A549 (cell line): ENCODE measurements at regions of chr16 and their contacts with region 1.

Region 1: DNA sequence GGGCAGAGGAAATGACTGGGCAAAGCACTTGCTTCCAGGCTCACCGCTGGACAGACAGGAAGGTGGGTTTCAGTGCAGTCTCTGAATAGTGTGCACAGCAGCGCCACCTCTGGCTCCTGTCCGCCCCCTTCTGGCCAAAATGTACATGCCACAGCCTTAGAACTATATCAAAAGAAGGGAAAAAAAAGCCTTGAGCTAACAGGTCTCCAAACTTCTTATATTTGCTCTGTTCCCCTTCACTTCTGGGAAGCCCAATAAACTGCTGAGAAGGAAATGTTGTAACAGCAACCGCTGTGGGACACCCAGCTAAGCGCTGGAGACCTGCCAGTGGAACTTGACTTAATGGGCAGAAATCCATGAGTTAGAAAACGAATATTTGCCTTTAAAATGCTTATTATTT is 17.5 kb downstream of the COG7 start:
- DNase-seq: peak; percentile 73 to 74
- ATAC-seq: peak; percentile 94 to 99
- H3K4me3 ChIP-seq: no peak overlapping the region
- H3K27ac ChIP-seq: no peak overlapping the region
- H3K4me1 ChIP-seq: no peaks in the 10 kb centered on the region
- CTCF ChIP-seq: peak; percentile 91
- EP300 ChIP-seq: no peak
- POLR2A ChIP-seq: no peak
- RAD21 ChIP-seq: peak; percentile 65 to 77

Region 2: DNA sequence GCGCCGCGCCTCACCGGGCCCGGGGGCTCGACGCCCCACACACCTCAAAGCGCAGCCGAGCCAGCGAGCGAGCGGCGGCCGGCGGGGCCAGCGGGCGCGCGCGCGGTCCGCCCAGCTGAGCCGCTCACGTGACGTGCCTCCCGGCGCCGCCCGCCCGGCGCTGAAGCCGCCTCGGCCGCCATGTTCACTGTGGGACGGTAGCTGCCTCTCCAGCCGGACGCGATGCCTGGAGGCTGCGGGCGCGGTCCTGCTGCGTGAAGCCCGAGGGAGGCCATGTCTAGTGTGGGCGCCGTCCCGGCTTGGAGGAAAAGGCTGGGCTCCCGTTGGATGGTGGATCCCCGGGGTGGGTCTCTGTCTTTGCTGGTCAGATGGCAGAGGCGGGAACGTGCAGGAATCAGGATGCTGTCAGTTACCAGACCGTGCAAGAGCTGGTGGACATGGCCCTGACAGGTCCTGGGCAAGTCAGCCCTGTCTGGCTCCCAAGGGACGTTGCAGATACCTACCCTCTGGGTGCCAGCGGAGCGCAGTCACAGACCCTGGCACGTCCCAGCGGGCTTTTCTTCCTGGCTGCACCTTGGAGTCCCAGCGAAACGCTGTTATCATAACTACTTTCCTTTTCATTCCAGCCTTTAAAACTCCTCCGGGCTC is 286.0 kb before region 1 on chr16 and contains the start of gene USP31:
- CTCF ChIA-PET with region 1: interaction called, 13 read pairs
- POLR2A ChIA-PET with region 1: no interaction called
- DNase-seq: peak; percentile 82 to 97
- ATAC-seq: peak; percentile 95 to 100
- H3K4me3 ChIP-seq: peak within 1 kb of the TSS; percentile 64
- H3K27ac ChIP-seq: peak within 1 kb of the TSS; percentile 95 to 97
- H3K4me1 ChIP-seq: peaks cover 39% of the 10 kb centered on the region
- CTCF ChIP-seq: no peak
- EP300 ChIP-seq: no peak
- POLR2A ChIP-seq: peak; percentile 56; the same call in 1 of the 2 replicates
- RAD21 ChIP-seq: no peak
- polyA plus RNA-seq, gene USP31: 17.9 and 18.0 TPM in 2 replicates

Region 3: DNA sequence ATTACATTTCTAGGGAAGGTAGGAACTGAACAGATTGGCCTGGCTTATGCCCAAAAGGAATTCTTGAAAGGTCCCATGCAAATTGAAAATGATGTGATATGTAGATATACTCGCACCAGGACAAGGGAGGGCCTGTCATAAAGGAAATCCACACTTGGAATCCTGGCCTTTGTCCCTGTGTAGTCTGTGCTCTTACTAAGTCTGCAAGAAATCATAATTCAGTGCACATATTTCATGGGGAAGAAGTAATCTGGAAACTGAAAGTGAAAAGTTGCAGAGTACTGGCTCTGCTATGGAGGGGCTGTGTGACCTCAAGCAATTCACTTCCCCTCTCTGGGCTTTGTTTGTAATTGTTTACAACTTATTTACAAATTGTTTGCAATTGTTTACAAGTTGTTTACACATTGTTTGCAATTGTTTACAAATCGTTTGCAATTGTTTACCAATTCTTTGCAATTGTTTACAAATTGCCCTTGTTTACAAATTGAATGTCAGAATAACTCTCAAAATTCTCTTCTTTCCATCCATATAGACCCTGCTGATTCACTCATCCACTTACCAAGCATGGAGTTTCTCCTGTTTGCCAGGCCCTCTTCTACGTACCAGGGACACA is 240.0 kb before region 1 on chr16:
- CTCF ChIA-PET with region 1: interaction called, 336 read pairs
- POLR2A ChIA-PET with region 1: no interaction called
- DNase-seq: no peak
- ATAC-seq: no peak
- H3K4me3 ChIP-seq: no peak overlapping the region
- H3K27ac ChIP-seq: no peak overlapping the region
- H3K4me1 ChIP-seq: no peaks in the 10 kb centered on the region
- CTCF ChIP-seq: no peak
- EP300 ChIP-seq: no peak
- POLR2A ChIP-seq: no peak
- RAD21 ChIP-seq: no peak

Region 4: DNA sequence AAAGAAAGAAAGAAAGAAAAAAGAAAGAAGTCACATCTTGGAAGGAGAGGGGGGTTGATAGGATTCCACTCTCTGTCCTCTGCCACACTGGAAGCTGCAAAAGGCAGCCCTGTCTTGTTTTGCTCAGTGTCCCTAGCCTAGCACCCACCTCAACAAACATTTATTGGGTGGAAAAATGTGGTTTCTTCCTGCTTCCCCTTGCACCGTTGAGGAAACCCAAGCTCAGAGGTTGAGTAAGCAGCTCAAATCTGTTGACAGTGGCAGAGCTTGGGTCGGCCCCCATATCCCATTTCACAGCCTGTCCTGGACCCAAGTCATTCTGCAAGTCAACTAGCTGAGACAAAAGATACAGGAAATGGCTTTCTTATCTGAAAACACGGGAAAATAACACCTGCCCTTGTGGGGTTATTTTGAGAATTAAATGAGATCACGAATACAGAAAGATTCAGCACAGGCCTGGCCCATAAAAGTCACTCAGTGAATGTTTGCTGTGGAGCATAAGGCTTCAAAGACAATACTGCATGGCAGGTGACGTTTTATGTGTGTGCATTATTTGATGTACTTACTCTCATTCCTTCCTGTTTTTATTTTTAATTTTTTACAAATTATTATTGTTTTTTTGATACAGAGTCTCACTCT is 69.8 kb before region 1 on chr16:
- CTCF ChIA-PET with region 1: interaction called, 10 read pairs
- POLR2A ChIA-PET with region 1: no interaction called
- DNase-seq: peak in 1 of 2 experiments; percentile 40
- ATAC-seq: no peak; a peak in 1 of 6 replicates
- H3K4me3 ChIP-seq: no peak overlapping the region
- H3K27ac ChIP-seq: peak overlapping the region in 1 of 2 experiments; percentile 41; a peak in 1 of 6 replicates
- H3K4me1 ChIP-seq: peaks cover 18% of the 10 kb centered on the region; the same call in 1 of the 3 replicates
- CTCF ChIP-seq: no peak
- EP300 ChIP-seq: no peak
- POLR2A ChIP-seq: no peak
- RAD21 ChIP-seq: no peak

Region 5: DNA sequence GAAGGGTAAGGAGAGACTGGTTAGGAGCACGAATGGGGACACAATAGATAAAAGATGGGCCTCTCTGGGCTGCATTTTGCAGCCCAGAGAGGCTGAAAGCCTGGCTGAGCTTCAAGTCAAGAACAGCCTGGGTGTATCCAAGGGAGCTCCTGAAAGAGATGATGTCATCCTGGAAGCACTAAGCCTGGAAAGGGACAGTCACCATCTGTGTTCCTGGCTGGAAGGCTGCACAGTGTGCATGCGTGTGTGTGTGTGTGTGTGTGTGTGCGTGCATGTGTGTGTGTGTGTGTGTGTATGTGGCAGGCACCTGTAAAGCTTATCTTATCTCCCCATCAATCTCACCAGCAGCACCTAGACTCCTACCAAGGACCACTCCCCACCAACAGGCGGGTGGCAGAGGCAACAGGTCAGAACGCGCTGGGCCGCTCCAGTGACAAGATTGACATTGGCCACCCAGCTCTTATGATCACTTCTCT is 26.6 kb before region 1 on chr16:
- CTCF ChIA-PET with region 1: interaction called, 24 read pairs
- POLR2A ChIA-PET with region 1: interaction called, 4 read pairs
- DNase-seq: peak in 1 of 2 experiments; percentile 34
- ATAC-seq: peak; percentile 66 to 86
- H3K4me3 ChIP-seq: no peak overlapping the region
- H3K27ac ChIP-seq: peak overlapping the region in 1 of 2 experiments; percentile 43; a peak in 1 of 6 replicates
- H3K4me1 ChIP-seq: peaks cover 23% of the 10 kb centered on the region; the same call in 2 of the 3 replicates
- CTCF ChIP-seq: no peak
- EP300 ChIP-seq: no peak
- POLR2A ChIP-seq: no peak
- RAD21 ChIP-seq: no peak

Region 6: DNA sequence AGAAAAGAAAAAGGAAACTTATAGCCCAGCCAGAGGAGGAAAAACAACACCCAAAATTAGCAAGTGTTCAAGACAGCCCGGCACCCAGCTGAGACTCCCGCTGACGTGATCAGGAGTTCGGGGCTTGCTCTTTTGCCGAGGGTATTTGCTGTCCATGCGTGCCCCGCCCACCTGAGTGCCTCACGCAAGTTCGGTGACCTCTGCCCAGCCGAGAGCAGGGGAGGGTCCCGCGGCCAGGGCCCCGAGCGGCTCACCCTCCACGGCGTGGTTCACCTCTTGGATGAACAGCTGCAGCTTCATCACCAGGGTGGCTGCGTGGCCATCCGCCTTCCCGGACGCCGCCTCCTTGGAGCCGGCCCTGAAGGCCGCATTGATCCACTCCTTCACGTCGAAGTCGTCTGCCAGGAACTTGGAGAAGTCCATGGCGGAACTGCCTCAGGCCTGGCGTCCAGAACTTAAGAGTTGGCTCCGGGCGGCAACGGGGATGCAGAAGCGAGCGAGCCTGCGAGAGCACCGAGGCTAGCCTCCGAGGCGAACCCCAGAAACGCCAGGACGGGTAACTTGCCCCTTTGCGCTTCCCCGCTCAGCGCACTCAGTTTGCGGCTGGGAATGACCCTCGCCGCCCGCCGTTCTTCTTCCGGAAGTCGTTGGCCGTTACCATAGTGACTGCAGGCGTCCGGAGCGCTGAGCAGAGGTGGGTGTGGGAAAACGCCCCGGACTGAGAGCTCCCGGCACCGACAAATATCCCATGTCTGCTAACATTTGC is 17.3 kb after region 1 on chr16 and contains the start of gene COG7:
- CTCF ChIA-PET with region 1: interaction called, 120 read pairs
- POLR2A ChIA-PET with region 1: interaction called, 3 read pairs
- DNase-seq: peak; percentile 76 to 89
- ATAC-seq: peak; percentile 94 to 96
- H3K4me3 ChIP-seq: peak within 1 kb of the TSS; percentile 62
- H3K27ac ChIP-seq: peak within 1 kb of the TSS; percentile 84 to 95
- H3K4me1 ChIP-seq: peaks cover 12% of the 10 kb centered on the region; the same call in 1 of the 3 replicates
- CTCF ChIP-seq: no peak
- EP300 ChIP-seq: no peak
- POLR2A ChIP-seq: peak; percentile 65
- RAD21 ChIP-seq: no peak
- polyA plus RNA-seq, gene COG7: 18.5 and 24.7 TPM in 2 replicates

Region 7: GRCh38 chr16:23734176-23734893 is 298.8 kb after region 1 on chr16:
- CTCF ChIA-PET with region 1: no interaction called
- POLR2A ChIA-PET with region 1: no interaction called
- DNase-seq: no peak
- ATAC-seq: 0 out of 6 replicates have a peak, but pooled peaks of 1 of the 2 experiments have one; percentile 23
- H3K4me3 ChIP-seq: no peak overlapping the region
- H3K27ac ChIP-seq: no peak overlapping the region
- H3K4me1 ChIP-seq: no peaks in the 10 kb centered on the region
- CTCF ChIP-seq: no peak
- EP300 ChIP-seq: no peak
- POLR2A ChIP-seq: no peak
- RAD21 ChIP-seq: no peak